A673 (cell line): ENCODE measurements at regions of chr2 and their contacts with region 1.

Region 1: GRCh38 chr2:124027182-124027581 is 2.1 kb downstream of the CNTNAP5 start:
- DNase-seq: peak; percentile 67
- H3K4me3 ChIP-seq: no peak overlapping the region
- H3K27ac ChIP-seq: no peak overlapping the region
- H3K4me1 ChIP-seq: no peaks in the 10 kb centered on the region
- H3K27me3 ChIP-seq: peaks cover 37% of the 10 kb centered on the region
- CTCF ChIP-seq: peak; percentile 68

Region 2: DNA sequence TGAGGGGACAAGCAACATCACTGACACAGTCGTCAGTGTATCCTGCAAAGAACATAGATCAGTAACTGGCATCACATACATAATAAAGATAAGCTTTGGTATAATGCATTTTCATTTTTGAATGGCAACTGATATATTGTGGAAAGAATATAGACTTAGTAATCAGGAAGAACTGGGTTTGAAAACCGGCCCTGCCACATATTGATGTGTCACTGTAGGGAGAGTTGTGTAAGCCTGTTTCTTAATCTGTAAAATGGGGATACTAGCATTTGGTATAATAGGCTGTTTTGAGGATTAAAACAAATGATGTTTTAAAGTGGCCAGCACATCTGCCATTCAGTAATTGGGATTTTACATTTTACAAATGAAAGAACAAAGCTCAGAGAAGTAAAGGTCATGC is 279.9 kb before region 1 on chr2:
- CTCF ChIA-PET with region 1: interaction called, 12 read pairs
- POLR2A ChIA-PET with region 1: no interaction called
- intact Hi-C with region 1: no loop called
- DNase-seq: no peak
- H3K4me3 ChIP-seq: no peak overlapping the region
- H3K27ac ChIP-seq: no peak overlapping the region
- H3K4me1 ChIP-seq: no peaks in the 10 kb centered on the region
- H3K27me3 ChIP-seq: no peaks in the 10 kb centered on the region
- CTCF ChIP-seq: no peak